Calu3 (cell line): ENCODE measurements at regions of chr12 and their contacts with region 1.

Region 1: GRCh38 chr12:131850856-131851559 is 22.8 kb downstream of the MMP17 start:
- DNase-seq: peak; percentile 96
- H3K4me3 Mint-ChIP-seq: peak overlapping the region; percentile 36
- H3K27ac Mint-ChIP-seq: no peak overlapping the region
- H3K4me1 Mint-ChIP-seq: peaks cover 4% of the 10 kb centered on the region
- H3K27me3 Mint-ChIP-seq: peaks cover 34% of the 10 kb centered on the region
- CTCF ChIP-seq: peak; percentile 95

Region 2: DNA sequence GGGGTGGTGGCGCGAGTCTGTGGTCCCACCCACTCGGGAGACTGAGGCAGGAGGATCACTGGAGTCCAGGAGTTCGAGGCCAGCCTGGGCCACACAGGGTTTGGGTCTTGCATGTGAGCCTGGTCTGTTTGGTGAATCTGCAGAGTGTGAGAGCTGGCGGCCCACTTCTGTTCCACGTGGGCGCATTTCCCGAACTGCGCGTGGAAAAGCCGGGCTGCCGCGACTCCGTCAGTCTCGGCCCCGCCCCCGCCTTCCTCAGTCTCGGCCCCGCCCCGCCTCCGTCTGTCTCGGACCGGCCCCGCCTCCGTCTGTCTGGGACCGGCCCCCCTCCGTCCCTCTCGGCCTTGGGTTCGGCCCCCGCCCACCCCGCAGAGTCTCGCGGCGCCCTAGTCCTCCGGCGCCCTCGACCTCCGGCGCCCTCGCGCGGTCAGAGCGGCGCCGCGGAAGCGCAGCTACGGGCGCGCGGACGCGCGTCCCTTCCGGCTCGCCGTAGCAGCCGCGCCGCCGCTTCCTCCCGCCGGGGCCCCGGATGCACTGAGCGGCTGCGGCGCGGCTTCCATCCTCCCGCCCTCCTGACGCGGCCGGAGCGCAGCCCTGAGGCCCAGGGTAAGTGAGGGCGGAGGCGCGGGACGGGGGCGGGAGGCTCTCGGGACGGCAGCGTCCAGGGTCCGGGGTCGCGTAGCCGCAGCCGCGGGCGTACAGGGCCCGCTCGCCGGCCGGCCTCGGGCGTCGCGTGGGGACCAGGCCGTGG is 98.6 kb after region 1 on chr12 and contains the start of gene EP400:
- CTCF ChIA-PET with region 1: interaction called, 15 read pairs
- intact Hi-C with region 1: loop called (anchors 2 kb)
- DNase-seq: peak; percentile 98
- H3K4me3 Mint-ChIP-seq: peak within 1 kb of the TSS; percentile 84
- H3K27ac Mint-ChIP-seq: peak within 1 kb of the TSS; percentile 61
- H3K4me1 Mint-ChIP-seq: peaks cover 10% of the 10 kb centered on the region
- H3K27me3 Mint-ChIP-seq: no peaks in the 10 kb centered on the region
- CTCF ChIP-seq: peak; percentile 54
- total RNA-seq, gene EP400: 84.4 and 88.7 TPM in 2 replicates

Region 3: GRCh38 chr12:131980260-131980659 is 129.3 kb after region 1 on chr12:
- CTCF ChIA-PET with region 1: interaction called, 10 read pairs
- intact Hi-C with region 1: no loop called
- DNase-seq: no peak
- H3K4me3 Mint-ChIP-seq: no peak overlapping the region
- H3K27ac Mint-ChIP-seq: no peak overlapping the region
- H3K4me1 Mint-ChIP-seq: no peaks in the 10 kb centered on the region
- H3K27me3 Mint-ChIP-seq: no peaks in the 10 kb centered on the region
- CTCF ChIP-seq: no peak

Region 4: DNA sequence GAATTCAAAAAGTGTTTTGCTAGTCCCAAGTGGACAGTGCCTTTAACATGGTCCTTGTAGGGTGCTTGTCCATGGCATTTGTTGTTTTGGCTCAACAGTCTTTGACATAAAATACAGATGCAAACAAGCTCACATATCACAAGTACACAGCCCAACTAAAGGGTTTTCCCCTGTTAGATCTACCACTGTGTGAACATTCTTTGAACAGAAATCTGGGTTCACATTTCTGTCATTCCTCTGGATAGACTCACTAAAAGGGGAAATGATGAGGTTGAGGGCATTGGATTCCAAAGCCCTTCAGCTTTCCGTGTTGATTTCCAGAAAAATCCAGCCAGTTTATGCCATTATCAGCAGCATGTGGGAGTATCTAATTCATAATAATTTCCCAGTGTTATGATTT is 152.8 kb after region 1 on chr12:
- CTCF ChIA-PET with region 1: interaction called, 5 read pairs
- intact Hi-C with region 1: loop called (anchors 1 kb)
- DNase-seq: no peak
- H3K4me3 Mint-ChIP-seq: no peak overlapping the region
- H3K27ac Mint-ChIP-seq: no peak overlapping the region
- H3K4me1 Mint-ChIP-seq: peaks cover 8% of the 10 kb centered on the region
- H3K27me3 Mint-ChIP-seq: no peaks in the 10 kb centered on the region
- CTCF ChIP-seq: no peak